Motor neuron (in vitro differentiated cells): ENCODE measurements at regions of chr1 and their contacts with region 1.

Region 1: DNA sequence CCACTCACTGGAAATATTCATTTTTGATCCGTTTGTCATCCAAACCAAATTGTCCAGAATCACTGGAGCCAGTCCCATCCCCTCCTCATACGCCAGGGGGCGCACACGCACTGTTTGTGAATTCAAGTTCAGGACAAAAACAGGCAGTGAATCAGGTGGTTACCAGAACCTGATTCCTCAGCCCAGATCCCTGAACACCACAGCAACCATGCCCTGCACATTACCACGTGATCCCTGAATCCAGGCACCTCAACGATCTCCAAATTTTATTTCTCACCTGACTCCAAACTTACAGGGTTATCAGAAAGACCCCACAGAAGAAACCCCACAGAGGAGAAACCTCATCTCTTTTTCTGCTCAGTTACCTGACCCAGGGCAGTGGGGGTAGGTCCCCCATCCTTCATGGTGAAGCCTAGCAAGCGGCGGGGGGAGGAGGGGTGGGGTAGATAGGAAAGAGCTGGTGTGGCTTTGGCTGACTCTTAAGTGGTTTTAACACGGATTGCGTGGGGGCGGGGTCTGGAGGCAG is 1.4 kb upstream of the PTPRF start:
- ATAC-seq: peak; percentile 27 to 68 (median 46)
- H3K4me3 ChIP-seq: peak overlapping the region in 1 of 5 donors; percentile 0
- H3K27ac ChIP-seq: no peak overlapping the region
- H3K4me1 ChIP-seq: peaks cover 27 to 31% of the 10 kb centered on the region in 2 donors

Region 2: DNA sequence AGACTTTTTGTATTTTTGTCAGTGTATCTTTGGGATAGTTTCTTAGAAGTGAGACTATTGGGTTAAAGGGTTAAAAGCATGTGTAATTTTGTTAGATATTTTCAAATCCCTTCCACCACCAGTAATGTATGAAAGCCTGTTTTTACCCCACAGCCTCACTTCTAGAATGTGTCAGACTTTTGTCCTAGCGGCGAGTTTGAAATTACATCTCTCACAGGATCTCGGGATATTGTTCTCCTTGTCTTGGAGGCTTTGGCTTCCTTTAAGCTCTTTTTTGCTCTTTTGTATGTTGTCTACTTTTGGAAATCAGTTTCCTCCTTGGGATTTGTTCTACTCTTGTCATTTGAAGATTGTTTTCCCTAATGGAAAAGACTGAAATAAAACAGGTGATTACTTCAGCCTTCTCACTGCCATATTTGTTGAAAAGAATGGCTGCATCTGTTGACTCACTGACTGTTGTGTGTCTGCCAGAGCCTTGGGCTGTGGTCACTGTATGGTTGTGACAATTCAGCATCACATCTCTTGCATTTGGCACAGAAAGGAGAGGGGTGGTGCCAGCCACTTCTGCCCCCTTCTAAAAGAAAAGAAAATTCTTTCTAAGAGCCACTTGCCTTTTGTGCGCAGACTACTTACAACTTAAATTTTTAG is 200.7 kb after region 1 on chr1:
- in situ Hi-C with region 1: loop called in 1 of 9 experiments (anchors 25 kb)
- ATAC-seq: peak in 3 of 8 experiments; percentile 29 to 45 (median 31)
- H3K4me3 ChIP-seq: no peak overlapping the region
- H3K27ac ChIP-seq: no peak overlapping the region
- H3K4me1 ChIP-seq: peaks cover 0 to 3% of the 10 kb centered on the region in 2 donors

Region 3: DNA sequence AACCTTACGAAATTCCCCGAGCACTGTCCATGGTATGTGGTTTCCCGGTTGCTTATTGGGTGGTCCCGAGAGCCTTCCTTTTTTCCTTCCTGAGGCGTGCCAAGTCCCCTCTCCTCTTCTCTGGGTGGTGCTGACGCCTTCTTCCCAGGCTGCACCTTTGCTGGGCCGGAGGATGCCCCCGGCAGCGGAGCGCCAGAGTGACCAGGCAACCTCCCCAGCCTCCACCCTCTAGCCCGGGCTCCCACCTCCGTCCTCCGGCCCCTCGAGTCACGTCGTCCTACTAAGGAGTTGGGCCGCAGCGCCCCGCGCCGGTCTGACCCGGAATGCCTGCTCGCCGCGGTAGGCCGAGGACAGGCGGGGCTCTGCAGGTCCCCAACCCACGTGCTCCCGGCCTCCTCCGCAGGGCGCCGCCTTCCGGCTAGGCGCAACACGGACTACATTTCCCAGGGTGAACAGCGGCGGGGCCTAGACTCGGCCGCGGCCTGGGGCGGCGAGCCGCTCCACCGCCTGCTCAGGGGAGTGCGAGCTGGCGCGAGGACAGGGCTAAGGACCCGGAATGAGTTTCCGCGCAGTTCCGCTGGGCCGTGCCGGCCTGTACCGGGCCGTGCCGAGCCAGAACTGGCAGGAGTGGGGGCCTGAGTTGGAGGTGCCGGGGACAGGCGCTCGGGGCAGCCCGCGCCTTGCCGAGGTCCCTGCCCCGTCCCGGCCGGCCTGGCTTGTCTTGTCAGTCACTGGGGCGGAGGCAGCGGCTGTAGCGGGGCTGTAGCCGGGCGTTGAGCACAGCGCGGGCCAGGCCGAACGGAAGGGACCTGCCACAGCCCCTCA is 417.2 kb after region 1 on chr1 and contains the start of gene IPO13:
- in situ Hi-C with region 1: loop called in 4 of 9 experiments (anchors 25 kb)
- ATAC-seq: peak; percentile 94 to 97 (median 96)
- H3K4me3 ChIP-seq: peak within 1 kb of the TSS; percentile 57 to 88 (median 65)
- H3K27ac ChIP-seq: peak within 1 kb of the TSS; percentile 97 to 100
- H3K4me1 ChIP-seq: peaks cover 17 to 20% of the 10 kb centered on the region in 2 donors
- total RNA-seq, gene IPO13: 21.1 to 30.4 (median 26.7) TPM